ENCODE measurements at regions of chr3 and their contacts with region 1.

Region 1: GRCh38 chr3:15089201-15089600 is 9.7 kb downstream of the RBSN start:
- DNase-seq: no peak
- ATAC-seq: no peak
- H3K4me3 ChIP-seq: no peak overlapping the region
- H3K4me3 Mint-ChIP-seq: no peak overlapping the region
- H3K27ac ChIP-seq: no peak overlapping the region
- H3K27ac Mint-ChIP-seq: no peak overlapping the region
- H3K4me1 ChIP-seq: no peaks in the 10 kb centered on the region
- H3K4me1 Mint-ChIP-seq: peaks cover 0 to 8% (median 4%) of the 10 kb centered on the region in 3 donors
- H3K27me3 ChIP-seq: no peaks in the 10 kb centered on the region
- H3K27me3 Mint-ChIP-seq: no peaks in the 10 kb centered on the region

Region 2: DNA sequence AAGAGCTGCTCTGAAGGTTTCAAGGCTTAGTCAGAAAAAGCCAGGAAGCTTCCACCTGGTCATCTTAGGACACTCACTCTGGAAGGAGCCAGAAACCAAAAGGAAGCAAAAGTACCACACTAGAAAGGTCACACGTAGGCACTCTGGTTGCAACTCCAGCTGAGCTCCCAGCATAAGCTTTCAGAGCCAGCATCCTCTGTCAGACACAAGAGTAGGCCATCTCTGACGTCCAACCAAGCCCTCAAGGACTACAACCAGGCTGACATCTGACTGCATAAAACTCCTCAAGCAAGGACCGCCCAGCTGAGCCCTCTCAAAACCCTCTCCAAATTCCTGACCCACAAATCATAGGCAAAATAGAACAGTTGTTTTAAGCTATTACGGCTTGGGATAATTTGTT is 230.4 kb after region 1 on chr3:
- CTCF ChIA-PET with region 1: no interaction called
- POLR2A ChIA-PET with region 1: interaction called in 1 of 2 experiments, 15 read pairs
- DNase-seq: no peak
- ATAC-seq: no peak
- H3K4me3 ChIP-seq: no peak overlapping the region
- H3K4me3 Mint-ChIP-seq: peak overlapping the region in 2 of 3 donors; percentile 17 to 21
- H3K27ac ChIP-seq: no peak overlapping the region
- H3K27ac Mint-ChIP-seq: peak overlapping the region; percentile 80 to 88
- H3K4me1 ChIP-seq: peaks cover 15 to 59% of the 10 kb centered on the region in 2 experiments
- H3K4me1 Mint-ChIP-seq: peaks cover 70 to 86% (median 81%) of the 10 kb centered on the region in 3 donors
- H3K27me3 ChIP-seq: no peaks in the 10 kb centered on the region
- H3K27me3 Mint-ChIP-seq: no peaks in the 10 kb centered on the region